ENCODE measurements at regions of chr4 and their contacts with region 1.

Region 1: DNA sequence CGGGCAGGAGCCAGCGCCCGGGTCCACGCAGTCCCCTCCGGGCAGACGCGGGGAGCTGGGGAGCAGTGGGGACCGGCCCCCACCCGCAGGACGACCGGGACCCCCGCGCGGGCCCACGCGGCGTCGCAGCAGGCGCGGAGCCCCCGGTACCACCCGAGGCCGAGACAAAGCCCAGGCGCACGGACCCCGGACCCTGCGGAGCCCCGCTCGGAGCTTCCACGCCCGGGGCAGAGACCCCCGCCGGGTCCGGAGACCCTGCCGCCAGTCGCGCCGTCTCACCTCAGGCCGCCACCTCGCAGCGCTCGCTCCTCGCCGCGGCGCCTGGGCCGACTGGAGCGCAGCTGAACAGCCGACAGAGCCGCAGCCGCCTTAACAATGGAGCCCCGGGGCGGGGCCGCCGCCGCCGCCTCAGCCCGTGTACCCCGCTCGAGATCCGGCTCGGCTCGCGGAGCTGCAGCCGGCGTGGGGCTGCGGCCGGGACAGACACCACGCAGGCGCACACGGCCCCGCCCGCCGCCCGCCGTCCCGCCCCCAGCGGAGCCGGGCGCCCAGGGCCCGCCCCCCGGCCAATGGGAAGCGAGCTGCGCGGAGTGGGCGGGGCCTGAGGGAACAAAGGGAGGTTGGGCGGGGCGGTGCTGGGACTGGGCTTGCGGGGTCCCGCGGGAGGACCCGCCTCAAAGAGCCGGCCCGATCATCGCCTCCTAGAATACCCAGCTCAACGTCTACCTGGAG is at the start of gene AFAP1:
- DNase-seq: no peak
- H3K4me3 ChIP-seq: peak within 1 kb of the TSS; percentile 94 to 99 (median 98)
- H3K27ac ChIP-seq: peak within 1 kb of the TSS; percentile 99
- H3K4me1 ChIP-seq: peaks cover 9 to 58% (median 45%) of the 10 kb centered on the region in 4 donors
- H3K27me3 ChIP-seq: no peaks in the 10 kb centered on the region
- CTCF ChIP-seq: no peak
- EP300 ChIP-seq: no peak
- POLR2A ChIP-seq: peak; percentile 46
- total RNA-seq, gene AFAP1: 37.8 to 71.3 (median 50.9) TPM

Region 2: DNA sequence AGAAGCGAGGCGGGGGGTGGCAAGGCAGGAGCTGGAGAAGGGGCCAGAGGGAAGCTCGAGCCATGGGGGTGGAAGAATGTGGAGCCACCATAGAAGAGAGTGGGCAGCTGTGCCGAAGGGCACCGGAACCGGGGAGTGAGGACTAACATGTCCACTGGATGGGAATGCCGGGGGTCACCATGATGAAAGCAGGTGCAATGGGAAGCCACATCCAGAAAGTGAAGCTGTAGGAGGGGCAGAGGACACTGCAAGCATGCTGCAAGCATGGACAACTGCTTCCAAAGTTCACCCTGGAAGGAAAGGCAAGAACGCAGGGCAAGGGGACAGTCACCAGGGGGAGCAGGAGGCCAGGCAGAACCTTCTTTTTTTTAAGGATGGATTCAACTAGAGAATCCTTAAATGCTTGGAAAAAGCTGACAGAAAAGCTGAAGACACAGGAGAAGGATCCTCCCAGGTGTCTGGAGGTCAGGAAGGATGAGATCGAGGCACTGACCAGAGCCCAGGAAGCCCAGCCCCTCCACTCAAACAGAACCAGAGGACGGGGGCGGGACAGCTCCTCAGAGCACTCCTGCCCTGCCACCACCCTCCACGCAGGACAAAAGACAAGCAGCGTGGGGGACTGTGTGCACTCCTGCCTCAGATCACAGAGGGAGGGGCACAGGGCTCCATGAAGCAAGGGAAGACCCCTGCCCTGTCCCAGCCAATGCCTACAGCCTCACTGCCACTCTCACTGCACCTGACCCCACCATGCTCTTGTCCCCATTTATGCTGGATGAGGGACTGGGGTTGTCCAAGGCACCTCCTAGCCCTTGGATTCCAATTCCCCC is 169.1 kb before region 1 on chr4:
- intact Hi-C with region 1: no loop called
- DNase-seq: no peak
- H3K4me3 ChIP-seq: no peak overlapping the region
- H3K27ac ChIP-seq: peak overlapping the region in 3 of 4 donors; percentile 35 to 55 (median 40)
- H3K4me1 ChIP-seq: peaks cover 16 to 75% (median 60%) of the 10 kb centered on the region in 4 donors
- H3K27me3 ChIP-seq: no peaks in the 10 kb centered on the region
- CTCF ChIP-seq: peak; percentile 34 to 47 (median 42)
- EP300 ChIP-seq: no peak
- POLR2A ChIP-seq: no peak

Region 3: DNA sequence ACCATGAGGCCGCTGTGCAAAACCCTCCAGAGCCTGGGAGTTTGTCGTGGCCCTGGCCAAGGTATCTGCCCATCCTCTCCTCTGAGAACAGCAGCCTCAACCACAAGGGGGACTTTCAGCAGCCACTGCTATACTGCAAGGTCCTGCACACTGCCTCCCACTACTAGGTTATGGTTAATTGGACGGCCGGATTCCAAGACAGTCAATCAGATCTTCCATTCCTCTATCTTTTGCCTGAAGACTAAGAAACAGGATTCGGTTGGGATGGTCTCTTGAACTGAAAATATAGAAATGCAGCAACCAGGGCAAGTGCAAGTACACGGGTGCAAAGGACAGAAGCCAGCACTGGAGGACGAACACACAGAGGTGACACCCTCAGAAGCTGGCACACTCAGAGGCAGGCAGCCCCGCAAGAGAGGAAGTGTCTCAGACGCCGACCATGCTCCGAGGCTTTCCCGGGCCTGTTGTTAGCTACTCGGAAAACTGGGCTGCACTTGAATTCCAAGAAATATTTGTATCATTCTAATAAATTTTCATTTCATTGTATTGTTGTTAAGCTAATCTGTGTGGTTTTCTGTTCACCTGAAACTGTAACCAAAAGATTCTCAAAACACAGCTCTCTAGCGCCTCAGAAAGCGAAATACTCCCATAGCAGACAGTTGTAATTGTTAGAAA is 63.2 kb before region 1 on chr4:
- intact Hi-C with region 1: loop called (anchors 5 kb)
- DNase-seq: no peak
- H3K4me3 ChIP-seq: peak overlapping the region; percentile 17 to 36 (median 29)
- H3K27ac ChIP-seq: peak overlapping the region; percentile 74 to 89 (median 74)
- H3K4me1 ChIP-seq: peaks cover 29 to 86% (median 79%) of the 10 kb centered on the region in 4 donors
- H3K27me3 ChIP-seq: no peaks in the 10 kb centered on the region
- CTCF ChIP-seq: peak; percentile 32 to 43 (median 37)
- EP300 ChIP-seq: no peak
- POLR2A ChIP-seq: no peak

Measured in esophagus muscularis mucosa (tissue), 4 donors.